Posterior vena cava (tissue), 2 donors: ENCODE measurements at regions of chr4 and their contacts with region 1.

Region 1: GRCh38 chr4:104394406-104395167 is 100.1 kb downstream of the CXXC4 start:
- DNase-seq: no peak

Region 2: GRCh38 chr4:104365618-104366017 is 29.0 kb before region 1 on chr4:
- intact Hi-C with region 1: no loop called
- DNase-seq: no peak

Region 3: DNA sequence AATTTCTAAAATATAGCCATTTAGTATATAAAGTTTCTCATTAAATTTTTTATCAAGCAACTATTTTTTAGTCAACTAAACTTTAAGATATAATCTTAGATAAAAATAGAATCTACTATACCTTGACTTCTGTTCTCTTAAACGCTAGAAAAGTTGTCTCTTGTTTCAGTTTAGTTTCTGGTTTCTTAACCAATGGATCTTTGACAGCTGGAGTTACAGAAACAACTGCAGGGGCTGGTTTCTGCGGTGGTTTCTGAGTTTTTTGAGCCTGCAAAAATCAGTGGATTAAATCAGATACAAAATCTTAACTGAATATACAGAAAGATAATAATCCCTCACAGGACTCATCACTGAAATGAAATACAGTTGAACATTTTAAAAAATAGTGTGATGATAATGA is 1292.0 kb after region 1 on chr4:
- intact Hi-C with region 1: no loop called
- DNase-seq: no peak

Region 4: GRCh38 chr4:106002994-106003393 is 1608.4 kb after region 1 on chr4:
- intact Hi-C with region 1: loop called in 1 of 2 experiments (anchors 10 kb)
- DNase-seq: no peak